ENCODE measurements at regions of chr2 and their contacts with region 1.

Region 1: DNA sequence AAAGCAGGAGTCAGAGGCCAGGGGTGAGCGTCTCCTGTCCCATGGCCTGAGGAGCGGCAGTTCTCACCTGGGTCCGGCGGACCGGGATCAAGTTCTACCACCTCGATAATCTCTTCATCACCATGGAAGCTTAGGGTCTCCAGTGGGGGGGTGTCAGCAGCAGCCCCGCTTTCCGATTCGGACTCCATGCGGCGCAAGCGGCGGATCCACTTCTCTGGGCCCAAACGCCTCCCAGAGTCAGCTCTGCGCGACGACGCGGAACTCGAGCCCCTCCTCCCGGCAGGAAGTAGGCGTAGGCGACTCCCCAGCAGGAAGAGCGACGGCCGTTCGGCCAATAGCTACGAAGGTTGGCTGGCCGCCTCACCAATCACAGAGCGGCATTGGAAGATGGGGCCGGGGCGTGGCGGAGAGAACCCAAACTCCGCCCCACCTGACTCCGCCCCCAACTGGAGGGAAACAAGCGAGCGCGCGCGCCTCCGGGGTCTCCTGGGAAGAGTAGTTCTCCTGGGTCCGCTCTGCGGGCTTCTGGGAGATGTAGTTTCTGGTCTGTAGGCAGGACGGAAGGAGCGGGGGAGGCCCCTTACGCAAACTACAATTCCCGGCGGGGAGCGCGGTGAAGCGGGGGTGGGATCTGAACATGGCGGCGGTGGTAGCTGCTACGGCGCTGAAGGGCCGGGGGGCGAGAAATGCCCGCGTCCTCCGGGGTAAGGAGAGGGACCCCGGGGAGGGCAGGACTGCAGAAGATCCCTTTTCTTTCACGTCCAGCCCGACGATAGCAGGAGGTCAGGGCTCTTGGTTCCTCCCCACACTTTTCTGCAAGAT is at the starts of genes AAMP and PNKD:
- DNase-seq: peak; percentile 100
- H3K4me3 Mint-ChIP-seq: peak within 1 kb of the TSS; percentile 80
- H3K27ac Mint-ChIP-seq: peak within 1 kb of the TSS; percentile 87
- H3K4me1 Mint-ChIP-seq: peaks cover 42% of the 10 kb centered on the region
- H3K27me3 Mint-ChIP-seq: no peaks in the 10 kb centered on the region
- total RNA-seq, gene AAMP: 58.7 to 59.4 TPM
- total RNA-seq, gene PNKD: 20.4 to 21.4 TPM

Region 2: DNA sequence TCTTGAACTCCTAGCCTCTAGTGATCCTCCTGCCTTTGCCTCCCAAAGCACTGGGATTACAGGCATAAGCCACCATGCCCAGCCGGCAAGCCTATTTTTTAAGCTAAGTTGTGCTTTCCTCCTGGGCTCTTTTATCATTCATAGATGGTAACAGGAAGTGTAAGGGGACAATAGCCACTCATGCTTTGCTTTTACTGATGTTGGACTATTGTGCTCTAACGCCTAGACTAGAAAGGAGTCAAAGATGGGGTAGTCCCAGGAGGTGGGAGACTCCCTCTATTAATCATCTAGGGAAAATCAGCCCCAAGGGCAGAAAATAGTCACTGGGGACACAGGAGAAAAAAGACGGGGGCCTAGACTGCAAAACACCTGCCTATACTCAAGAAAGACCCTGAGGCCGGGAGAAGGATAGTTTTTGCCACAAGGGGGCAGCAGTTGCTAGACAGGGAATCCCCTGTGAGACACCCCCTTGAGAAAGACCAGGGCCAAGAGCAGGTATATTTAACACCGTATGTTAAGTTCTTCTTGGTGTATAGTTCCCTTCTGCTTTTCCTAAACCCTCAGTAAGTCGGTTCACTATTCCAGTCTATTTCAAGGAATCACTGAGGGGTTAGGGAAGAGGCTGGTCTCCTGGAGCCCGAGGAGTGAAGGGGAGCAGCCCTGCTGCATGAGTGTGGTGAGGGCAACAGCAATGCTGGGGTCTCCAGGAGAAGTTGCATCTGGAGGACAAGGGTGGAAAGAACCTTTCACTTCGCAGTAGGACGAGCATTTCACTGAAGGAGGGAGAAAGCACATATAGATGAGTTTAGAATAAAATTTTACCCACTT is 101.3 kb before region 1 on chr2:
- CTCF ChIA-PET with region 1: interaction called, 4 read pairs
- intact Hi-C with region 1: loop called (anchors 1 kb)
- DNase-seq: peak; percentile 79
- H3K4me3 Mint-ChIP-seq: no peak overlapping the region
- H3K27ac Mint-ChIP-seq: no peak overlapping the region
- H3K4me1 Mint-ChIP-seq: peaks cover 26% of the 10 kb centered on the region
- H3K27me3 Mint-ChIP-seq: no peaks in the 10 kb centered on the region

Region 3: DNA sequence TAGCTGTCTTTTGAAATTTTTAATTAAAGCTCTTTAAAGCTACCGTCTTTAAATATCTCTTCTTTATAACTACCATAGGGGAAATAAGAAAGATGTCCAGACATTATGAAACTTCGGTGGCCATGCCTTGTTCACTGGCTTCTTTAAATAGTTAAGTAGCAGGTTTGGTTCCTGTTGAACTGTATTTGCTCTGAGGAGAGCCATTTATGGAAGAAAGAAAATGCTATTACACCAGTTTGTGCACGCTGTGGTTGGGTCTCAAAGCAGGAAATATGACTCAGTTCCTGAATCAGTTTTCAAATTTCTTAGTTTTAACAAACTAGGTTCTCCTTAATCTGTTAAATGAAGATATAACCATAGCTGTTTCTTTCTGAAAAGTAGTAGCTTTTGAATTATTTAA is 40.9 kb before region 1 on chr2:
- CTCF ChIA-PET with region 1: interaction called, 4 read pairs
- intact Hi-C with region 1: loop called (anchors 1 kb)
- DNase-seq: peak; percentile 66
- H3K4me3 Mint-ChIP-seq: peak overlapping the region; percentile 32
- H3K27ac Mint-ChIP-seq: peak overlapping the region; percentile 87
- H3K4me1 Mint-ChIP-seq: peaks cover 81% of the 10 kb centered on the region
- H3K27me3 Mint-ChIP-seq: no peaks in the 10 kb centered on the region

Region 4: GRCh38 chr2:218301176-218301819 is 31.2 kb after region 1 on chr2:
- CTCF ChIA-PET with region 1: interaction called, 17 read pairs
- intact Hi-C with region 1: loop called (anchors 1 kb)
- DNase-seq: peak; percentile 97
- H3K4me3 Mint-ChIP-seq: no peak overlapping the region
- H3K27ac Mint-ChIP-seq: no peak overlapping the region
- H3K4me1 Mint-ChIP-seq: peaks cover 5% of the 10 kb centered on the region
- H3K27me3 Mint-ChIP-seq: no peaks in the 10 kb centered on the region

Region 5: GRCh38 chr2:218406209-218406948 is 136.3 kb after region 1 on chr2:
- CTCF ChIA-PET with region 1: no interaction called
- intact Hi-C with region 1: loop called (anchors 2 kb)
- DNase-seq: peak; percentile 96
- H3K4me3 Mint-ChIP-seq: peak overlapping the region; percentile 82
- H3K27ac Mint-ChIP-seq: peak overlapping the region; percentile 75
- H3K4me1 Mint-ChIP-seq: peaks cover 34% of the 10 kb centered on the region
- H3K27me3 Mint-ChIP-seq: peaks cover 2% of the 10 kb centered on the region

Region 6: DNA sequence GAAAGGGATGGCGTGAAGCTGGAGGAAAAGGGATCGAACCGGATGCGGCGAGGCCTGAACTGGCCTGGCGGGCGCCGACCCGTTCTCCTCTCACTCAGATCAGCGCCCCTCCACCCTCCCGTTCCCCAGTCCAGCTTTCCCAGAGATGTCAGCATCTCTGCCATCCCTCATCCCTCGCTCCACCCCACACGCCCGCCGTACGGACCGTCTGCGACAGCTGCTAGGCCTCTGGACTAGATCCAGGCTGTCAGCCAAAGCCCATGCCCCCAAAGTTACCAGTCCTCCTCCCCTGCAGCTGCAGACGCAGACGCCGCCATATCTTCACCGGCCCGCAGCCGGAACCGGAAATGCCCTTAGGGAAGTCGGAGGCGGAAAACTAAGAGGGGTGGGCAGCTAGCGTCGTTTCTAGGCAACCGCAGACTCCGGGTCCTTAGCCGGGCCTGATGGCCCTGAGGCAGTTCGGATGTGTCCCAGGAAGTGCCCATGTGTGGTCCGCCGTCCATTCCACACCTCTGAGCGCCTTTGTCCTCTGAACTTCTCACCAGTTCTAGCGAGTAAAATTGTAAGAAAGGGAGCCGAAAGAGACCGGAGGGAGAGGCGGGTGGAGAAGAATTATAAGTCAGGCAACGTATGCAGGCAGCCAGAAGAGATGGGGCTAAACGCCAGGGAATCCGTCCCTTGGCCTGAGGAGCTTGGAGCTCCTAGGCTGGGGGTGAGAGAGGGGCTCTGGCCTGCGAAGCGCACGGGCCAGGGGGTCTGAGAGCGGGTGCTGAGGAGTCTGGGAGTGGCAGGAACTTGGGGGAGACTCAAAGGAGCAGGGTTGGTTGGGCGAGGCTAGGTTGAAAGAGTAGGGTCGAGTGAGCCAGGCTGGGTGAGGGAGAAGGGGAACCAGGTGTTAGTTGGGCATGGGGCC is 401.8 kb after region 1 on chr2 and contains the starts of genes RNF25 and STK36:
- CTCF ChIA-PET with region 1: no interaction called
- intact Hi-C with region 1: loop called (anchors 1 kb)
- DNase-seq: peak; percentile 86
- H3K4me3 Mint-ChIP-seq: peak within 1 kb of the TSS; percentile 98
- H3K27ac Mint-ChIP-seq: peak within 1 kb of the TSS; percentile 90
- H3K4me1 Mint-ChIP-seq: peaks cover 22% of the 10 kb centered on the region
- H3K27me3 Mint-ChIP-seq: no peaks in the 10 kb centered on the region
- total RNA-seq, gene RNF25: 9.6 to 10.4 TPM
- total RNA-seq, gene STK36: 14.7 to 15.1 TPM

Measured in activated naive CD4-positive, alpha-beta T cell treated with anti-CD3 and anti-CD28 coated beads for 36 hours (primary cell).